Common myeloid progenitor, CD34-positive (primary cell): ENCODE measurements at regions of chr5 and their contacts with region 1.

Region 1: DNA sequence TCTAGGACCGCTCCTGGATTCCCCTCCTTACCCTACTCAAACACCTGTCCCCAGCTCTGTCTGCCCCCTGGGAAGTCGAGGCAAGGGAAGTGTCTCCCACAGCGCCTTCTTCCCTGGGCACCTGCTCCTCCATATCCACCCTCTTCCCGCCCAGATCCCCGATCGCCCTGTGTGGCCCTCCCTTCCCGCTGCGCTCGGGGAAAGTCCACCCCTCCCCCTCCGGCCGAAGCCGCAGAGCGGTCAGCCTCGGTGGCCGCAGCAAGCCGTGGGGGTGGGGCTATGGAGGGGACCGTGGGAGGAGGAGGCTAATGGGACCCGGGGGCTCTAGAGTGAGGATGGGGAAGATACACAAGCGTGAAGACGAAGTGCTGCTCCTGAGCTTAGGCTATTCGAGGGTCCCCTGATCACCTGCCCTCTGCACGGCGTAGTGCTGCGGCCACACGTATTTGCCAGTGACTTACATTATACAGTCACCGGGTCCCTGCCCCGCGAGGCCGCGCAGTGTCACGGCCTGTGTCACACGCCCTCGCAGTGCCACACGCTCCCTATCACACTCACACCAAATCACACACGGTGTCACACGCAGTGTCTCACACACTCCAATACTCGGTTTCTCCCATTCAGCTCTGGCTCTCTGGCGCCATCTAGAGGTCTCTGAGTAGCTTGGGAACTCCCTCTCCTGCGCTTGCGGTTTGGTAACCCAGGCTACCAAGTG is 658 bp upstream of the PCDH1 start:
- DNase-seq: peak; percentile 92 to 97 (median 95)
- H3K4me3 ChIP-seq: peak overlapping the region in 3 of 7 experiments; percentile 30 to 60 (median 48)
- H3K27ac ChIP-seq: no peak overlapping the region
- H3K4me1 ChIP-seq: peaks cover 0 to 40% (median 30%) of the 10 kb centered on the region in 4 experiments
- H3K27me3 ChIP-seq: peaks cover 6 to 97% (median 54%) of the 10 kb centered on the region in 5 experiments

Region 2: GRCh38 chr5:141691867-141692532 is 186.9 kb before region 1 on chr5:
- CTCF ChIA-PET with region 1: interaction called, 101 read pairs
- POLR2A ChIA-PET with region 1: no interaction called
- DNase-seq: peak; percentile 70 to 89 (median 87)
- H3K4me3 ChIP-seq: peak overlapping the region in 5 of 7 experiments; percentile 2 to 64 (median 48)
- H3K27ac ChIP-seq: no peak overlapping the region
- H3K4me1 ChIP-seq: peaks cover 0 to 5% (median 4%) of the 10 kb centered on the region in 4 experiments
- H3K27me3 ChIP-seq: peaks cover 0 to 19% (median 15%) of the 10 kb centered on the region in 5 experiments

Region 3: GRCh38 chr5:141811287-141812155 is 67.3 kb before region 1 on chr5:
- CTCF ChIA-PET with region 1: interaction called, 29 read pairs
- POLR2A ChIA-PET with region 1: no interaction called
- DNase-seq: peak; percentile 37 to 69 (median 64)
- H3K4me3 ChIP-seq: peak overlapping the region in 1 of 7 experiments; percentile 16
- H3K27ac ChIP-seq: no peak overlapping the region
- H3K4me1 ChIP-seq: no peaks in the 10 kb centered on the region
- H3K27me3 ChIP-seq: peaks cover 11 to 62% (median 17%) of the 10 kb centered on the region in 5 experiments

Region 4: GRCh38 chr5:141835928-141836670 is 42.8 kb before region 1 on chr5:
- CTCF ChIA-PET with region 1: interaction called, 12 read pairs
- POLR2A ChIA-PET with region 1: no interaction called
- DNase-seq: peak in 2 of 3 donors; percentile 44 to 57
- H3K4me3 ChIP-seq: peak overlapping the region in 4 of 7 experiments; percentile 8 to 56 (median 34)
- H3K27ac ChIP-seq: no peak overlapping the region
- H3K4me1 ChIP-seq: peaks cover 1 to 56% (median 26%) of the 10 kb centered on the region in 4 experiments
- H3K27me3 ChIP-seq: peaks cover 0 to 2% (median 0%) of the 10 kb centered on the region in 5 experiments

Region 5: DNA sequence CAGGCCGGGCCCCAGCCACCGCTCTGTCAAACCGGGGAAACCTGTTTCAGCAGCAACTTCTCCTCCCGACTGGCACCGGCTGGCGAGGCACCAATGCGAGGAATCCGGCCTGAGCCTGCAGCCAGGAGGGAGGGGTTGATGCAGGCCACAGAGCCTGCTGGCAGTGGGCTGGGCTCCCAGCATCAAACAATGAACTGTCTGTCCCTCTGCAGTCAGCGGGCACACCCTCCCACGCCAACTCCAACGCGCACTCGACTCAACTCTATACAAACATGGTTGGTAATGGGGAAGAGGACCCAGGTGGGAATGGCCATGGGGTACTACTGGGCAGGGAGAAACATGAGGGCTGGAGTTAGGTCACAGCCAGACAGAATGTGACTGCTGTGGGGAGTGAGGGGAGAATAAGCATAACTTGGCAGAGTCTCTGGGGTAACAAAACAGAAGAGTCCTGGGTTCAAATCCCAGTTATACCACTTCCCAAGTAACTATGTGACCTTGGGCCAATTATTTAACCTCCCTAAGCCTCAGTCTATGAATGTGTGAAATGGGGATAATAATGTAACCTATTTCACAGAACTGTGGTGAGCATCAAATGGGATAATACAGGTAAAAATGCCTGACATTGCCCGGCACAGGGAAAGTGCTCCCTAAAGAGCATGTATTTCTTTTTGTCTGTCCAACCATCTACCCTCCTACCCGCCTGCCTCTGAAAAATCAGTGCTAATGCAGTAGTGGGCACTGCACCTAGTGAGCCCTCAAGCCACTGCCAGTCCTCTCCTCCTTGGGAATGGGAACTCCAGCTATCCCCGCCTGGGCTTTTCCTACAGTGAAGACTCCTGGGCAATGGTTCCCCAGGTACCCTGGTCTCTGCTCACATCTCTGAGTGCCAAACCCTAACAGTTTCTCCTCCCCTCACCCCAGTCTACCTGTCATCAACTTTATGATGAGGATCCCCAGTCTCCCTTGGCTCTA is 12.4 kb before region 1 on chr5:
- CTCF ChIA-PET with region 1: interaction called, 29 read pairs
- POLR2A ChIA-PET with region 1: interaction called, 3 read pairs
- DNase-seq: no peak
- H3K4me3 ChIP-seq: no peak overlapping the region
- H3K27ac ChIP-seq: no peak overlapping the region
- H3K4me1 ChIP-seq: no peaks in the 10 kb centered on the region
- H3K27me3 ChIP-seq: peaks cover 3 to 31% (median 15%) of the 10 kb centered on the region in 5 experiments

Region 6: DNA sequence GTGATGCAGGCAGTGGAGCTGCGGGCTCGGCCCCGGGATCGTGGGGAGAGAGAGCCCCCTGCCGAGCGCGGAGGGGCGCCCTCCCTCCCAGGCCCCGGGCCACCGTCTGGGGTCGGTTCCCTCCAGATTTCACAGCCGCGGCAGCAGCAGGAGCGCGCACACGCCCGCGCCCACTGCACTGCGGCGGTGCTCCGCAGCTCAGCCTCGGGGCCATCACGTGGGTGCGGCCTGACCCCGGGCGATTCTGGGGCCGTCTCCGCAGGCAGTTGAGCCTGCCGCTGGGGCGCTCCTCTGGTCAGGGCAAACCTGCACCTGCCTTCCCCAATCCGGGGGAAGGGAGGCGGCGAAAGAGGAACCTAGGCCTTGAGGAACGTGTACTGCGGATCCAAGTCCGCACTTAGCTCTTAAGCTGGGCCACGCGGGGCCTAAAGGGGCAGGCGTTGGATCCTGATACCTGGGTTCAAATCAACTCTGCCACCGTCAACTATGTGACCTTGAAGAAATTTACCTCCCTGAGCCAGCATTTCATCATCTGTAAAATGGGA is 35.4 kb after region 1 on chr5:
- CTCF ChIA-PET with region 1: interaction called, 16 read pairs
- POLR2A ChIA-PET with region 1: no interaction called
- DNase-seq: peak; percentile 55 to 82 (median 74)
- H3K4me3 ChIP-seq: peak overlapping the region in 6 of 7 experiments; percentile 30 to 71 (median 58)
- H3K27ac ChIP-seq: no peak overlapping the region
- H3K4me1 ChIP-seq: peaks cover 5 to 14% (median 12%) of the 10 kb centered on the region in 4 experiments
- H3K27me3 ChIP-seq: peaks cover 0 to 8% (median 4%) of the 10 kb centered on the region in 5 experiments

Region 7: DNA sequence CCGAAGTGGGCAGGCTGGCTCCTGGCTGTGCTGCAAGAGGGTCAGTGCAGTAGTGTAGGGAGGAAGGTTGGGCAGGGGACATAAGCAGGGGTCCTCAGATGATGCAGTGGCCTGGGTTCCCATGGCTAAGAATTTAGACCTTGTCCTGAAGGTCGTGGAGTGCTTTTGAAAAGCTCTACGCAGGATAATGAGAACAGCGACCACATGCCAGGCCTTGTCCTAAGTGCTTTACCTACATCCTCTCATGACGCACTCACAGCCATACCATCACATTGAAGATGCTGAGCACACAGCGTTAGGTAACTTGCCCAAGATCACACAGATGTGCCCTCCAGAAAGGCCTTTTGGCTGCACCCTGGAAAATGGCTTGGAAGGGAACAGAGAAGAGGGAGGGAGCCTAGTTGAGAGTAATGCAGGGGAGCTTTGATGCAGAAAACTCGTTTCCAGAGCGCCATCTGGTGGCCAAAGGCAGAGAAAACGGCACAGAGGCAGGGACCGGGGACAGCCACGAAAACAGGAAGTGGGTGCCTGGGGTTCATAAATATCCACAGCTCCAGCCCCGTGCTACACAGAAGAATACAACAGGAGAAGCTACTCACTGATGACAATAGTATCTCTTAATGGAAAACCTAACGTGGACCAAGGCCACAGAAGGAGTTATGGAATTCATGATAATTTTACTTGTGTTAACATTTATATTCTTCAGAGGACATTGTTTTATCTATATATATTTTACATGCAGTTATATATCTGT is 81.8 kb after region 1 on chr5:
- CTCF ChIA-PET with region 1: interaction called, 23 read pairs
- POLR2A ChIA-PET with region 1: no interaction called
- DNase-seq: peak; percentile 87 to 95 (median 93)
- H3K4me3 ChIP-seq: no peak overlapping the region
- H3K27ac ChIP-seq: no peak overlapping the region
- H3K4me1 ChIP-seq: peaks cover 10 to 50% (median 35%) of the 10 kb centered on the region in 4 experiments
- H3K27me3 ChIP-seq: no peaks in the 10 kb centered on the region